ENCODE measurements at regions of chr1 and their contacts with region 1.

Region 1: GRCh38 chr1:203127666-203128430 is at the start of gene ADORA1:
- DNase-seq: peak; percentile 82
- total RNA-seq, gene ADORA1: 12.1 TPM

Region 2: GRCh38 chr1:203069030-203069747 is 58.7 kb before region 1 on chr1:
- intact Hi-C with region 1: loop called (anchors 2 kb)
- DNase-seq: no peak

Region 3: GRCh38 chr1:203326830-203327683 is 199.2 kb after region 1 on chr1:
- intact Hi-C with region 1: loop called (anchors 5 kb)
- DNase-seq: peak; percentile 98